ENCODE measurements at regions of chr16 and their contacts with region 1.

Region 1: GRCh38 chr16:85245307-85246172 is 133.3 kb upstream of the CIBAR2 start:
- DNase-seq: peak; percentile 38
- H3K4me3 ChIP-seq: no peak overlapping the region
- H3K27ac ChIP-seq: no peak overlapping the region
- H3K4me1 ChIP-seq: no peaks in the 10 kb centered on the region
- H3K27me3 ChIP-seq: no peaks in the 10 kb centered on the region
- CTCF ChIP-seq: peak; percentile 60 to 92

Region 2: GRCh38 chr16:85151603-85152413 is 93.7 kb before region 1 on chr16:
- CTCF ChIA-PET with region 1: no interaction called
- dilution Hi-C with region 1: no loop called
- in situ Hi-C with region 1: no loop called
- intact Hi-C with region 1: no loop called
- DNase-seq: peak; percentile 76
- H3K4me3 ChIP-seq: no peak overlapping the region
- H3K27ac ChIP-seq: no peak overlapping the region
- H3K4me1 ChIP-seq: peaks cover 24% of the 10 kb centered on the region
- H3K27me3 ChIP-seq: no peaks in the 10 kb centered on the region
- CTCF ChIP-seq: no peak

Region 3: DNA sequence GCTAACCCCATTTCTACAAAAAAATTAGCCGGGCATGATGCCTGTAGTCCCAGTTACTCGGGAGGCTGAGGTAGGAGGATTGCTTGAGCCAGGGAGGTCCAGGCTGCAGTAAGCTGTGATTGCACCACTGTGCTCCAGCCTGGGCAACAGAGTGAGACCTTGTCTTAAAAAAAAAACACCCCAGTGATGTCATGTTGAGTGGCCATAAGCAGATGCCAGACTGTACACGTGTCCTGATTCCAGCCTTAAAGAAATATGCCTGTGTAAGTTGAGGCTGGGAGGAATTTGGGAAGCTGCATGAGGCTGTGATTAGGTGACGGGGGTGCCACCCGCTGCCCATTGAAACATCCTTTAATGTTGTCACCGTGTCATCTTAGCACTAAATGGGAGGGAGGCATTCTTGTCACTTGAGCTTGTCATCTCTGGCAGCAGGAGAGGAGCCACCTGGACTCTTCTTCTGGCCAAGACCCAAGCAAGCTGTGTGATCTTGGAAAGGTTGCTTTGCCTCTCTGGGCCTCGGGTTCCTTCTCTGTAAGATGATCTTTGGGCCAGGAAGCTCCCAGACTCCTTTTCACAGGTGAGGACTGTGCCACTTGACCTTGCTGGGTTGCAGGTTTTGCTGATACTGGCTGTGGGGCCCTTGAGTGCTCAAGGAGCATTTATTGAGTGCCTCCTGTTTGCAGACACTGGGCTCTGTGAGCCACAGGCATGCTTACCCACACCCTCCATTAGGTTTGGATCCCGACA is 34.9 kb before region 1 on chr16:
- CTCF ChIA-PET with region 1: no interaction called
- dilution Hi-C with region 1: no loop called
- in situ Hi-C with region 1: no loop called
- intact Hi-C with region 1: no loop called
- DNase-seq: peak; percentile 68
- H3K4me3 ChIP-seq: no peak overlapping the region
- H3K27ac ChIP-seq: no peak overlapping the region
- H3K4me1 ChIP-seq: peaks cover 10% of the 10 kb centered on the region
- H3K27me3 ChIP-seq: no peaks in the 10 kb centered on the region
- CTCF ChIP-seq: no peak

Region 4: GRCh38 chr16:85330694-85331188 is 85.2 kb after region 1 on chr16:
- CTCF ChIA-PET with region 1: no interaction called
- dilution Hi-C with region 1: loop called (anchors 5 kb)
- in situ Hi-C with region 1: no loop called
- intact Hi-C with region 1: no loop called
- DNase-seq: peak; percentile 61
- H3K4me3 ChIP-seq: no peak overlapping the region
- H3K27ac ChIP-seq: no peak overlapping the region
- H3K4me1 ChIP-seq: no peaks in the 10 kb centered on the region
- H3K27me3 ChIP-seq: no peaks in the 10 kb centered on the region
- CTCF ChIP-seq: peak; percentile 50 to 52

Measured in mammary epithelial cell (primary cell).